CD8-positive, alpha-beta T cell (primary cell): ENCODE measurements at regions of chr3 and their contacts with region 1.

Region 1: DNA sequence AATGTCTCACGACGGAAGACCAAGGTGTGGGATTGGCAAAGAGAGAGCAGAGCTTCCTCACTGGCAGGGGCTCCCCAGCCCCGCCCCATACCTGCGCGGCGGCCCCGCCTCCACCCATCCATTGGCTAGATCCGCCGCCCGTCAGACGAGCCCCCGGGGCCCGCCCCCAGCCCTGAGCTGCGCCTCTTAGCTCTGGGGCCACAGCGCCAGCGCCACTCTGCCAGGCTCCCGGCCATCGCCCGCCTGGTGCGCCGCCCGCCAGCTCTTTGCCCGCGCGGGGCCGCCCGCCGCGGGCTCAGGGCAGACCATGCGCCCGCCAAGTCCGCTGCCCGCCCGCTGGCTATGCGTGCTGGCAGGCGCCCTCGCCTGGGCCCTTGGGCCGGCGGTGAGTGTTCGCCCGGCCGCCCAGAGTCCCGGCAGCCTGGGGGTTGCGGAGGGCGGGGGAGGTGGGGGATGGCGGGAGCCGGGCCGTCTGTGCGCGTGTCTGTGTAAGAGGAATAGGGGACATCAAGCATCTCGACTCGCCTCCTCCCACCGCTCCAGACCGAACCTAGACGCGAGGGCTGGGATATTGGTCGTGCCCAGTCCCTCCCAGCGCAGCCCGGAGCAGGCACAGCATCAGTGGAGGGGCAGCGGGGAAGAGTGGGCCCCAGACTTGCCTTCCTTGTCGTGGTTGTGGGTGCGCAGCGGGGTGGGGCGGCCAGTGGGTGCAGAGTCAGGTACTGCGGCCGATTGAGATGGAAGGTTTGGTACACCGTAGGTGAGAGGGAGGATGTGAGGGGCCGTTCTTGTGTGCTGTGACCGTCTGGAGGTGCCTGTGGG is at the start of gene VIPR1:
- DNase-seq: peak; percentile 90 to 97 (median 92)
- ATAC-seq: peak; percentile 97
- H3K4me3 ChIP-seq: peak within 1 kb of the TSS; percentile 59 to 95
- H3K4me3 Mint-ChIP-seq: peak within 1 kb of the TSS; percentile 95
- H3K27ac ChIP-seq: peak within 1 kb of the TSS; percentile 12 to 62
- H3K27ac Mint-ChIP-seq: peak within 1 kb of the TSS; percentile 91
- H3K4me1 ChIP-seq: peaks cover 52% of the 10 kb centered on the region
- H3K4me1 Mint-ChIP-seq: peaks cover 49% of the 10 kb centered on the region
- H3K27me3 ChIP-seq: peaks cover 3 to 7% of the 10 kb centered on the region in 2 experiments
- H3K27me3 Mint-ChIP-seq: peaks cover 16% of the 10 kb centered on the region
- CTCF ChIP-seq: no peak
- total RNA-seq, gene VIPR1: 31.2 to 34.3 TPM

Region 2: DNA sequence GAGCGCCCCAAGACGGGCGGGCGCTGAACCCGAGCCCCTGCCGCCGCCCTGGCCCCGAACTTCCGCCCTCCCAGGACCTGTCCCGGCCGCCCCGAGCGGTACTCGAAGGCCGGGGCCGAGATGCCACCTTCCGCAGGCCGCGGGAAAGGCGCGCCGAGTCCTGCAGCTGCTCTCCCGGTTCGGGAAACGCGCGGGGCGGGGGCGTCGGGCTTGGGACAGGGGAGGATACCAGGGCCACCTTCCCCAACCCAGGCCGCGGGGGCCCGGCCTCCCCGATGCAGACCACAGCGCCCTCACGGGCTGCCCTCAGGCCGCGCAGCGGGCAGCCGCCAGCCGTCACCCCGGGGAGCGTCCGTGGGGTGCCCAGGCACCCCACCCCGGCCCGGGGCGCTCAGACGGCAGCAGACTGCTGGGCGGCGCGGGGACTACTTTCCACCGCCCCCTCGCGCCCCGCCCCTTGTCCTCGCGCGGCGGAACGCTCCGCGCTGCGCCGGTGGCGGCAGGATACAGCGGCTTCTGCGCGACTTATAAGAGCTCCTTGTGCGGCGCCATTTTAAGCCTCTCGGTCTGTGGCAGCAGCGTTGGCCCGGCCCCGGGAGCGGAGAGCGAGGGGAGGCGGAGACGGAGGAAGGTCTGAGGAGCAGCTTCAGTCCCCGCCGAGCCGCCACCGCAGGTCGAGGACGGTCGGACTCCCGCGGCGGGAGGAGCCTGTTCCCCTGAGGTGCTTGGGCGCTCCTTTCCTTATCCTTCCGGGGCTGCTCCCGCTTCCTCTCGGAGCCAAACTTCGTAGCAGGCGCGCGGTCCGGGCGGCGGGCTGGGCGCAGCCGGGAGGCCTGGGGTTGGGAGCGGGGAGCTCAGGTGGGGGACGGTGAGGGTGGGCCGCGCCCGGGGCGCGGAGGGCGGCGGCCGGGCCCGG is 1303.4 kb before region 1 on chr3 and contains the start of gene CTNNB1:
- CTCF ChIA-PET with region 1: no interaction called
- POLR2A ChIA-PET with region 1: no interaction called
- intact Hi-C with region 1: loop called in 1 of 2 experiments (anchors 5 kb)
- DNase-seq: peak; percentile 87 to 96 (median 90)
- ATAC-seq: peak; percentile 81
- H3K4me3 ChIP-seq: peak within 1 kb of the TSS; percentile 95 to 98
- H3K4me3 Mint-ChIP-seq: peak within 1 kb of the TSS; percentile 96
- H3K27ac ChIP-seq: peak within 1 kb of the TSS; percentile 88 to 95
- H3K27ac Mint-ChIP-seq: peak within 1 kb of the TSS; percentile 97
- H3K4me1 ChIP-seq: peaks cover 40% of the 10 kb centered on the region
- H3K4me1 Mint-ChIP-seq: peaks cover 37% of the 10 kb centered on the region
- H3K27me3 ChIP-seq: no peaks in the 10 kb centered on the region
- H3K27me3 Mint-ChIP-seq: no peaks in the 10 kb centered on the region
- CTCF ChIP-seq: no peak
- total RNA-seq, gene CTNNB1: 206 to 225 TPM

Region 3: DNA sequence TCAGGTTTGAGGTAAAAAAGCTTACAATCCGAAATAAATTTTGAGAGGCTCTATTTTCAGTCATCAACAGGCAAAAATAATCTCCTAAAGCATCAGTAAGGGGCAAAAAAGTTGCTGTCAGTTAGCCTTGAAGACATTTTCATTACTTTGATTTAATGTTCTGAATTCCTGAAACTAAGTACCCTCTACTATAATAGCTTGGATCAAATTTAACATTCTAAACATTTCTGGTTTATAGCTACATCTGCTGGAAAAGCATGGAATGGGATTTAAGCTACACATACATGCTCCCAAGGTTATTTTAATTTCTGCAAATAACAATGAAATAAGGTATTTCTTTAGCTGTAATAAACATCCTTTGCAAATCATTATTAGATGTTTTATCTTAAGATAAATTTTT is 786.2 kb before region 1 on chr3:
- CTCF ChIA-PET with region 1: no interaction called
- POLR2A ChIA-PET with region 1: no interaction called
- intact Hi-C with region 1: no loop called
- DNase-seq: no peak
- ATAC-seq: no peak
- H3K4me3 ChIP-seq: no peak overlapping the region
- H3K4me3 Mint-ChIP-seq: no peak overlapping the region
- H3K27ac ChIP-seq: no peak overlapping the region
- H3K27ac Mint-ChIP-seq: no peak overlapping the region
- H3K4me1 ChIP-seq: no peaks in the 10 kb centered on the region
- H3K4me1 Mint-ChIP-seq: no peaks in the 10 kb centered on the region
- H3K27me3 ChIP-seq: no peaks in the 10 kb centered on the region
- H3K27me3 Mint-ChIP-seq: no peaks in the 10 kb centered on the region
- CTCF ChIP-seq: no peak

Region 4: DNA sequence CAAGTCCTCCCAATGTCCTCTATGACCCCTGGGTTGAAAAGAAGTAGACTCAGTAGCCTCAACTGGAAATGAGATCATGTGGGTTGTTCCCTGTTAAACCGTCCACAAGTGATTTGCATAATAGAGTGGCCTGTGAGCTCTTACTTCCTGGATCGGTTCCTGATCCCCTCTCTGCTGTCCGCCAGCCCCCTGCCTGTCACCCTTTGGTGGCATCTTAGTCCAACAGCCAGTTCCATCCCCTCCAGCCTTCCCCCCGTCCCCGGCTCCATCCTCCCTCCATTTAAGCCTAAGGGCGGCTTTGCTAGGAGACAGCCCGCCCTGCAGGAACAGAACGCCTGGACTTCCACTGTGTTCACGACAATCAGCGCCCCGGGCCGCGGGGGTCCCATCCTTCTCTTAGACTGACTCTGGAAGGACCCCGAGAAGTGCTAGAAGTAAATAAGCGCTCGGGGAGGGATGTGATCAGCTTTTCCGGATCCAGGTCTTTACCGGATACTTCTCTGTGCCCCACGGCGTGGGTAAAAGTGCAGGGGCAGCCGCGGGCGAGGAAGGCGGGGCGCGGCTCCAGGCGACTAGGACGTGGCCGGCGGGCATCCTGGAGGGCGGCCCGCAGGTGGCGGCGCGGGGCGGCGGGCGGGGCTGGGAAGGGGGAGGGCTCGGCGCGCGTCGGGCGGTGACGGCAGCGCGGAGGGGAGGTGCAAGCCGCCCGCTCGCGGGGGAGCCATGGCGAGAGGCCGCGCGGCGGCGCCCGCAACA is 489.5 kb before region 1 on chr3:
- CTCF ChIA-PET with region 1: no interaction called
- POLR2A ChIA-PET with region 1: no interaction called
- intact Hi-C with region 1: loop called in 1 of 2 experiments (anchors 5 kb)
- DNase-seq: peak; percentile 56 to 89 (median 71)
- ATAC-seq: peak; percentile 73
- H3K4me3 ChIP-seq: peak overlapping the region; percentile 85 to 89
- H3K4me3 Mint-ChIP-seq: peak overlapping the region; percentile 91
- H3K27ac ChIP-seq: peak overlapping the region; percentile 72 to 98
- H3K27ac Mint-ChIP-seq: peak overlapping the region; percentile 98
- H3K4me1 ChIP-seq: peaks cover 20% of the 10 kb centered on the region
- H3K4me1 Mint-ChIP-seq: peaks cover 35% of the 10 kb centered on the region
- H3K27me3 ChIP-seq: no peaks in the 10 kb centered on the region
- H3K27me3 Mint-ChIP-seq: no peaks in the 10 kb centered on the region
- CTCF ChIP-seq: no peak

Region 5: DNA sequence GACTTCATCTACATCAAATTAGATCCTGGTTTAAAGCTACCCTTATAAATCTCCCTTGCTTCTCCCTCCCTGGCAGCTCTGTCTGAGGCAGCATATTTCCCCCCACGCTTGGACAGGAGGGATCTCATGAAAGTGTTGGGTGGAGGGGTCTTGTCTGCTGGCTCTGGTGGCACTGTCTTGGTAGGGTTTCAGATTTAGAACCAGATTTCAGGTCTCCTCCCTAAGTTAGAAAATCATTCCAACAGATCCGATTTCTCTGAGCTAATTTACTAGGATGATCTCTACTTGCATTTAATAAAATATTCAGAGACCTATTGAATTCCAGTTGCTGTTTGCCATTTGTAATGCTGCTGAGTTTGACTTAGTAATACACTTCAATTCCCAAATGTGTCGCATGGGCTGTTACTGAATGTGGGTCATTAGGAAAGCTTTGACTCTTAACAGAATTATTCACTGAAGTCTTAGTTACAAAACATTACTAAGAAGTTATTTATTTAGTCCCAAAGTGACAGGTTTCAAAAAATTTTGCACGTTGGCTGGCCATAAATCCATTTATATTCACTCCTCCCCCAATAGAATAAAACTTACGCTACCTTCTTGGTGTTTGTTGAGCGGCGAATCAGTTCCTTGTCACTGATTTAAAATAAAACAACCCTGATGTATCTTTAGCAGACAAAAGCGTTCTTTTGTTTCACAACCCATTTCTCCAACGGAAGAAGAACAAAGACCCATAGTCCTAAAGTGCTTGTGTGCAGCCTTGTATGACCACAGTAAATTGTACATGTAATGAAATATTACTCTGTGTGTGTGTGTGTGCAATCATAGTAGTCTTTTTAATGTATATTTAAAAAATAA is 327.0 kb before region 1 on chr3:
- CTCF ChIA-PET with region 1: no interaction called
- POLR2A ChIA-PET with region 1: no interaction called
- intact Hi-C with region 1: no loop called
- DNase-seq: no peak
- ATAC-seq: no peak
- H3K4me3 ChIP-seq: no peak overlapping the region
- H3K4me3 Mint-ChIP-seq: no peak overlapping the region
- H3K27ac ChIP-seq: no peak overlapping the region
- H3K27ac Mint-ChIP-seq: no peak overlapping the region
- H3K4me1 ChIP-seq: peaks cover 21% of the 10 kb centered on the region
- H3K4me1 Mint-ChIP-seq: peaks cover 26% of the 10 kb centered on the region
- H3K27me3 ChIP-seq: no peaks in the 10 kb centered on the region
- H3K27me3 Mint-ChIP-seq: no peaks in the 10 kb centered on the region
- CTCF ChIP-seq: no peak

Region 6: GRCh38 chr3:42526616-42527367 is 24.2 kb after region 1 on chr3:
- CTCF ChIA-PET with region 1: interaction called, 556 read pairs
- POLR2A ChIA-PET with region 1: interaction called, 6 read pairs
- intact Hi-C with region 1: no loop called
- DNase-seq: peak in 8 of 9 experiments; percentile 14 to 68 (median 47)
- ATAC-seq: peak; percentile 89
- H3K4me3 ChIP-seq: no peak overlapping the region
- H3K4me3 Mint-ChIP-seq: peak overlapping the region; percentile 60
- H3K27ac ChIP-seq: peak overlapping the region; percentile 2 to 57
- H3K27ac Mint-ChIP-seq: peak overlapping the region; percentile 94
- H3K4me1 ChIP-seq: peaks cover 62% of the 10 kb centered on the region
- H3K4me1 Mint-ChIP-seq: peaks cover 70% of the 10 kb centered on the region
- H3K27me3 ChIP-seq: no peaks in the 10 kb centered on the region
- H3K27me3 Mint-ChIP-seq: no peaks in the 10 kb centered on the region
- CTCF ChIP-seq: peak; percentile 36

Region 7: GRCh38 chr3:42547401-42547945 is 44.8 kb after region 1 on chr3:
- CTCF ChIA-PET with region 1: interaction called, 556 read pairs
- POLR2A ChIA-PET with region 1: interaction called, 12 read pairs
- intact Hi-C with region 1: loop called in 1 of 2 experiments (anchors 1 kb)
- DNase-seq: peak; percentile 32 to 84 (median 70)
- ATAC-seq: peak; percentile 80
- H3K4me3 ChIP-seq: no peak overlapping the region
- H3K4me3 Mint-ChIP-seq: no peak overlapping the region
- H3K27ac ChIP-seq: no peak overlapping the region
- H3K27ac Mint-ChIP-seq: no peak overlapping the region
- H3K4me1 ChIP-seq: no peaks in the 10 kb centered on the region
- H3K4me1 Mint-ChIP-seq: peaks cover 4% of the 10 kb centered on the region
- H3K27me3 ChIP-seq: no peaks in the 10 kb centered on the region
- H3K27me3 Mint-ChIP-seq: no peaks in the 10 kb centered on the region
- CTCF ChIP-seq: peak; percentile 90

Region 8: DNA sequence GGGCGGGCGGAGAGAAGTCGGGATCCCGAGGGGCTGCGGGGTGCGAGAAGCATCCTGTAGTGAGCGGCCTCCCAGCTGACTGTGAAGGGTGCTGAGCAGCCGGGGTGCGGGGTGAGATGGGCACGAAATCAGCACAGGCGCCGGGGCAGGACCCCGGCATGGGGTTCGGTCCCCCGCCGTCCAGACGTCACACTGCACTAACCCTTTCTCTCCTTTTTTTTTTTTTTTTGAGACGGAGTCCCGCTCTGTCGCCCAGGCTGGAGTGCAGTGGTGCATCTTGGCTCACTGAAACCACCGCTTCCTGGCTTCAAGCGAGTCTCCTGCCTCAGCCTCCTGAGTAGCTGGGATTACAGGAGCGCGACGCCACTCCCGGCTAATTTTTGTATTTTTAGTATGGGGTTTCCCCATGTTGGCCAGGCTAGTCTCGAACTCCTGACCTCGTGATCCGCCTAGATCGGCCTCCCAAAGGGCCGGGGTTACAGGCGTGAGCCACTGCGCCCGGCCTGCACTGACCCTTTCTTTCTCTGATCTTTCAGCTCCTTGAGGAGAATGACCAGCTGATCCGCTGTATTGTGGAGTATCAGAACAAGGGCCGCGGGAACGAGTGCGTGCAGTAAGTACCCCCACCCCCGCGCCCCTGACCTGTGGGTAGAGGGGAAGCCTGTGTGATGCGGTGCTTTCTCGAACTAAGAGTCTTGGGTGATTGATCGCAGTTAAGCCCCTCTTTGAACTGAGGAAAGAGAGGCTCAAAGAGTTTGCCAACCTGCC is 88.5 kb after region 1 on chr3:
- CTCF ChIA-PET with region 1: interaction called, 3 read pairs
- POLR2A ChIA-PET with region 1: no interaction called
- intact Hi-C with region 1: loop called in 1 of 2 experiments (anchors 1 kb)
- DNase-seq: no peak
- ATAC-seq: peak; percentile 27
- H3K4me3 ChIP-seq: peak overlapping the region; percentile 65 to 68
- H3K4me3 Mint-ChIP-seq: peak overlapping the region; percentile 100
- H3K27ac ChIP-seq: peak overlapping the region; percentile 69 to 75
- H3K27ac Mint-ChIP-seq: peak overlapping the region; percentile 99
- H3K4me1 ChIP-seq: peaks cover 25% of the 10 kb centered on the region
- H3K4me1 Mint-ChIP-seq: peaks cover 33% of the 10 kb centered on the region
- H3K27me3 ChIP-seq: no peaks in the 10 kb centered on the region
- H3K27me3 Mint-ChIP-seq: no peaks in the 10 kb centered on the region
- CTCF ChIP-seq: no peak

Region 9: GRCh38 chr3:42635111-42635510 is 132.5 kb after region 1 on chr3:
- CTCF ChIA-PET with region 1: no interaction called
- POLR2A ChIA-PET with region 1: no interaction called
- intact Hi-C with region 1: no loop called
- DNase-seq: peak in 1 of 9 experiments; percentile 51
- ATAC-seq: peak; percentile 51
- H3K4me3 ChIP-seq: no peak overlapping the region
- H3K4me3 Mint-ChIP-seq: no peak overlapping the region
- H3K27ac ChIP-seq: no peak overlapping the region
- H3K27ac Mint-ChIP-seq: no peak overlapping the region
- H3K4me1 ChIP-seq: peaks cover 11% of the 10 kb centered on the region
- H3K4me1 Mint-ChIP-seq: no peaks in the 10 kb centered on the region
- H3K27me3 ChIP-seq: no peaks in the 10 kb centered on the region
- H3K27me3 Mint-ChIP-seq: no peaks in the 10 kb centered on the region
- CTCF ChIP-seq: no peak

Region 10: GRCh38 chr3:42880601-42881451 is 378.2 kb after region 1 on chr3:
- CTCF ChIA-PET with region 1: no interaction called
- POLR2A ChIA-PET with region 1: no interaction called
- intact Hi-C with region 1: loop called (anchors 1 to 5 kb)
- DNase-seq: peak; percentile 65 to 95 (median 86)
- ATAC-seq: peak; percentile 99
- H3K4me3 ChIP-seq: peak overlapping the region; percentile 75 to 77
- H3K4me3 Mint-ChIP-seq: peak overlapping the region; percentile 84
- H3K27ac ChIP-seq: peak overlapping the region; percentile 37 to 59
- H3K27ac Mint-ChIP-seq: peak overlapping the region; percentile 86
- H3K4me1 ChIP-seq: peaks cover 15% of the 10 kb centered on the region
- H3K4me1 Mint-ChIP-seq: peaks cover 11% of the 10 kb centered on the region
- H3K27me3 ChIP-seq: no peaks in the 10 kb centered on the region
- H3K27me3 Mint-ChIP-seq: no peaks in the 10 kb centered on the region
- CTCF ChIP-seq: peak; percentile 86